AG04449 (cell line): ENCODE measurements at regions of chr2 and their contacts with region 1.

Region 1: GRCh38 chr2:219057709-219058540 is 2.8 kb downstream of the IHH start:
- DNase-seq: no peak
- H3K4me3 ChIP-seq: no peak overlapping the region
- CTCF ChIP-seq: peak; percentile 96

Region 2: DNA sequence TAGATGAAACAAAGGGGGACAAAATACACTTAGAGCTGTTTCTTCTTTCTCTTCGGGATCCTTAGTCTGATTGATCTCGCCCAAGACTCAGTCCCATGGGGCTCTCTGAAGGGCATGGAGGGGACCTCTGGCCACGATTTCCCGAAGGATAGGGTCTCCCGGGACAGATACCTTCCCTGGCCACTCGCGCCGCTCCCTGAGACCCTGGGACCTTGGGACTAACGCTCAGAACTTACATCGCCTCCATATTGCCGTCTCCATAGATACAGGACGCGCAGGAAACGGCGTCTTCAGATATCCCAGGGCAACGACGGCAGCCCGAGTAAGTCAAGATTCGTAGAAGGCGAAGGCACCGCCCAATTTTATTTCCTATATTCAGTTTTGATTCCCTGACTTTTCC is 16.7 kb before region 1 on chr2 and contains the start of gene CFAP65:
- CTCF ChIA-PET with region 1: interaction called, 43 read pairs
- POLR2A ChIA-PET with region 1: no interaction called
- DNase-seq: no peak
- H3K4me3 ChIP-seq: peak within 1 kb of the TSS; percentile 56
- CTCF ChIP-seq: no peak

Region 3: DNA sequence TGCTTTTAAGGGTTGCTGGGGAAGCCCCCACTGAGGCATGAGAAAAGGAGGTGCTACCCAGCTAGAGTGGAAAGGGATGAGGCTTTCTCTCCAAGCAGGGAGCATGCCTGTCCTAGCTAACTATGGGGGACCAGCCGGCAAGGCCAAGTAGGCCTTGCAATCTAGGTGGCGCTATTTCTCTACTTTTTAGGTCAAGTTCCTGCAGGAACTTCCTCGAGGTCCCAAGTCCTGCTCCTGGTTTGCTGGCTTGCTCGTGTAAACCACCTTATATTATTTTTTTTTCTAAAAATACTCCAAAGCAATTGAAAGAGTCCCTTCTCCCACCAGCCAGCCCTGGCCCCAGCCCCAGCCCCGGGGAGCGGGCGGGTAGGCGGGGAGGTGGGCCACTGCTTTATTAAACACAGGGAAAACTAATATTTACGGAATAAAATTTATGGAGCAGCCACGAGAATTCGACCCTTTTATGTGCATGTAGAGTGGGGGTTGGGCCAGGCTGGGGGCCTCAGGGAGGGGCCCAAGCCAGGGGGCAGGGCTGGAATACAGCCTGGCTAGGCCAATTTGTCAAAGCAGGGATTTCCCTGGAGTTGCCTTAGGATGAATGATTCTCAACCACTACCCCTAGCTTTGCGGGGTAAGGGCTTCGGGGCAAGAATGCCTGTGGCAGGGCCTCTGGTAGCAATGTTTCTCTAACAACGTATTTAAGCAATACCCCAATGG is 15.6 kb after region 1 on chr2:
- CTCF ChIA-PET with region 1: interaction called, 198 read pairs
- POLR2A ChIA-PET with region 1: no interaction called
- DNase-seq: peak; percentile 16
- H3K4me3 ChIP-seq: no peak overlapping the region
- CTCF ChIP-seq: peak; percentile 52

Region 4: GRCh38 chr2:219079417-219079816 is 21.5 kb after region 1 on chr2:
- CTCF ChIA-PET with region 1: interaction called, 198 read pairs
- POLR2A ChIA-PET with region 1: no interaction called
- DNase-seq: no peak
- H3K4me3 ChIP-seq: no peak overlapping the region
- CTCF ChIP-seq: no peak

Region 5: GRCh38 chr2:219087361-219087760 is 29.4 kb after region 1 on chr2:
- CTCF ChIA-PET with region 1: interaction called, 22 read pairs
- POLR2A ChIA-PET with region 1: no interaction called
- DNase-seq: no peak
- H3K4me3 ChIP-seq: no peak overlapping the region
- CTCF ChIP-seq: no peak

Region 6: GRCh38 chr2:219104107-219105035 is 46.4 kb after region 1 on chr2:
- CTCF ChIA-PET with region 1: interaction called, 709 read pairs
- POLR2A ChIA-PET with region 1: no interaction called
- DNase-seq: no peak
- H3K4me3 ChIP-seq: no peak overlapping the region
- CTCF ChIP-seq: peak; percentile 71